Panc1 (cell line): ENCODE measurements at regions of chr10 and their contacts with region 1.

Region 1: DNA sequence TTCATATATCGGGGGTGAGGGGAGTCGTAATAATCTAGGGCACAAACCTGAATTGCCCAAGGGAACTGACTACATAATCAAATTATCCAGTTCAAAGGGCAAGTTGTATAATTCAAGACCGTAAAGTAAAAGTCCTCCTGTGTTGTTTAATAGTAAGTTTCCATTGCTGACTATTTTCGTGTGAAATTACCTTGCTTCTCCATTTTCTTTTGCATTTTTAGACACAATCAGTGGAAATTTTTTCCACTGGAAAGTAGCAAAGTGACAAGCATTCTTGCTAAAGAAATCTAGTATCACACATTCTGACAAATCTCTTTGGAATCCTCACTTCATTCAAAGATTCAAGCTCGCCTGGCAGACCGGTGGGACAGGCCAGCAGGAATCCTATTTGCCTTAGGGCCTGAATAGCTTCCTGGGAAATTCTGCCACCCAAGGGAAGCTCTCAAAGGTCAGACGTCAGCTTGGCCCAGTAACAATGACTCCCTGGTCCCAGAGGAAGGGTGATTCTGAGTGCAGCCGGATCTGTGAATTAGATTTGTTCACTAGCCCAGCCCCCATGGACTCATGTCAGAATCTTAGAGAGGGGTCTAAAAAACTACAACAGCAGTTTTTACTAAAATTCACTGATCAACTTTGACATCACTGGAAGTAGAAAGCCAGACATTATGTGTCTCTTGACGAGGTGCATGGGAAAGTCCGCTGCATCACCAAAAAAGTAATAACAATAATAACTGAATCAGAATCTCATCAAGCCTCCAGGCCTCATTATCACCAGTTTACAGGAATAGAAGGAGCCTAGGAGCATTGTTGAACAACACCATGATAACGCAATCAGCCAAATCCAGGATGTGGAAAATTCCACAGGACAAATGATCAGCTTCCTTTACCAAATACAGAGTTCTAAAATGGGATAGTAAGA is 161.0 kb downstream of the SKIDA1 start:
- DNase-seq: peak; percentile 62
- ATAC-seq: peak; percentile 97
- H3K4me3 ChIP-seq: no peak overlapping the region
- H3K27ac ChIP-seq: peak overlapping the region; percentile 99
- H3K4me1 ChIP-seq: peaks cover 32% of the 10 kb centered on the region
- H3K27me3 ChIP-seq: no peaks in the 10 kb centered on the region
- CTCF ChIP-seq: no peak

Region 2: DNA sequence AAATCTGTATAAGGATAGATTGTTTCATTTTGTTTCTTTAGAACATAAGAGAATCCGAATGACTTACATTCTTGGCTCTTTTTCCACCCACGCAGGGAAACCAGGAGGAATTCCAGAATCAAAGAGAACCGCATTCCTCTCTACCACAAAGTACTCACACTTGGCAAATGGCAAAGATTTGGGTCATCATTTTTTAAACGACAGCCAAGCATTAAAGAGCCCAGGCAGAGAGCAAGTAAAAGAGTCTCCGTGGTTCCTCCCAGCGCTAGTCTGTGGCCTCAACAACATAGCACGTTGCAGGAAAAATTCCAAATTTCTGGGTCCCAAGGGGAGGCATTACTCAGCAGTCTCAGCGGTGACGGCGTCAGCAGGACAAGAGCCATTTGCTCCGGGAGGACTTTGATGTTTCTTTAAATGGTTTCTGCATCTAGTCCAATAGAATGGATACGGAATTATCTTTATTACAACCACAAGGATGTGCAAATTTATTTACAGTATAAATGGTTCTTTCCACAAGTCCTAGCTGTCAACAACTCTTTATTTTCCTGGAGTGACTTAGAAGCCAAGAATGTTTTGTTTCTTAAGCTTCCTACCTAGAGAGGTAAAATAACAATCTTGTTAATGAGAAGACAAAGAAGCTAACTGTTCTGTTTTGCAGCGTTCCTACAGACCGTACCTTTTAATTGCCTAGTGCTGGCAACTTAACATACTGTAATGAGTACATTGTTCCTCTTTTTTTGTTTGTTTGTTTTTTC is 71.5 kb before region 1 on chr10:
- CTCF ChIA-PET with region 1: no interaction called
- POLR2A ChIA-PET with region 1: interaction called, 4 read pairs
- in situ Hi-C with region 1: no loop called
- intact Hi-C with region 1: loop called (anchors 10 kb)
- DNase-seq: no peak
- ATAC-seq: peak; percentile 95
- H3K4me3 ChIP-seq: peak overlapping the region; percentile 20 to 48
- H3K27ac ChIP-seq: peak overlapping the region; percentile 99
- H3K4me1 ChIP-seq: peaks cover 48% of the 10 kb centered on the region
- H3K27me3 ChIP-seq: no peaks in the 10 kb centered on the region
- CTCF ChIP-seq: no peak

Region 3: DNA sequence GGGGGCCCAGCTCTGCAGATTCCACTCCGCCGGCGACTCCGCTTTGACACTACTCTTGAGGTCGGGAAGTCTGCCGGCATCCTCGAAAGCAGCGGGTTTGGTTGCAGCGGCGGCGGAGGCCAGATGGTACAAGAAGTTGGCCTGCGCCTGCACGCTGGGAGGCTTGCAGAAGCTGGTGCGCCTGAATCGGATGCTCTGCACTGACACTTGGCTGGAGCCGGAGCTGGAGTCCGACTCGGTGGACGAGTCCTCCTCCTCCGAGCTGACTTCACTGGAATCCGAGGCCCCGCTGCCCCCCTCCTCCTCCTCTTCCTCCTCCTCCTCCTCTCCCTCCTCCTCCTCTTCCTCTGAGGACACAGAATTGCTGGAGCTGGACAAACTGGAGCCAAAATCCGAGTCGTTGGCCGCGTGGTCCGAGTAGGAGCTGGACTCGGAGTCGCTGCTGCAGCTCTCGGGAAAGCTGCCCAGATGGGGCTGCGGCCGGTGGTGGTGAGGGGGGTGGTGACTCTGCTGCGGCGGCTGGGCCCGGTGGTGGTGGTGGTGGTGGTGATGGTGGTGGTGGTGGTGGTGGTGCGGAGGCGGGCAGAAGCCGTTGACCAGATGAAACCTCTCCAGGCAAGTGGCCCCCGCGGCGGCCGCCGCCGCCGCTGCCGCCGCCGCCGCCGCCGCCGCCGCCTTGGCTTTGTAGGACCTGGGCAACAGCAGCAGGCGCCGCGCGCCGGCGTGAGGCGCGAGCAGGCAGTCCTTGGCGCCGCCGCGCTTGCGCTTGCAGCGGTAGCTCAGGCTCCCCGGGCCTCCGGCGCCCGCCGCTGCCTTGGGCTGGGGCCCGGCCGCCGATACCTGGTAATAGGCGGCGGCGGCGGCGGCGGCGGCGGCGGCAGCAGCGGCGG is 152.0 kb after region 1 on chr10:
- CTCF ChIA-PET with region 1: no interaction called
- POLR2A ChIA-PET with region 1: no interaction called
- in situ Hi-C with region 1: no loop called
- intact Hi-C with region 1: no loop called
- DNase-seq: no peak
- ATAC-seq: peak; percentile 47
- H3K4me3 ChIP-seq: peak overlapping the region; percentile 62
- H3K27ac ChIP-seq: peak overlapping the region; percentile 95
- H3K4me1 ChIP-seq: peaks cover 21% of the 10 kb centered on the region
- H3K27me3 ChIP-seq: no peaks in the 10 kb centered on the region
- CTCF ChIP-seq: no peak